ENCODE measurements at regions of chr10 and their contacts with region 1.

Region 1: DNA sequence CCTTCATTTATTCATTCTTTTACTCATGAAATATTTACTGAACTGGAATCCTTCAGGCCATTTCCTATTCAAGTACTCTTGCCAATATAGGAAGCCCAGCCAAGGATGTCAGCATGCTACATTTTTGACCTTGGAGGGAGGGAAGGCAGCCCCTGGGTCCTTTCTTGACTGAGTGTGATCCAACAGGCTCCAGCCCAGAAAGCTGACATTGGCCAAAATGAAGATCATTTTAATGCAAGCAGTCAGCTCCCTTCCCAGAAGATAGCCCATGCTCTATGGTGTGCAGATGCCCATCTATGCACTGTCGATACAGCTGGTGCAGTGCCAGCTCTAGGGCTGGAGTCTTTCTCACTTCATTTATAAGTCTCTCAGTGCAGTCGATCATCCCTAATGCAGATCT is 646.0 kb downstream of the KCNMA1 start:
- DNase-seq: no peak
- ATAC-seq: no peak
- H3K4me3 Mint-ChIP-seq: no peak overlapping the region
- H3K27ac Mint-ChIP-seq: no peak overlapping the region
- H3K4me1 Mint-ChIP-seq: no peaks in the 10 kb centered on the region
- H3K27me3 Mint-ChIP-seq: no peaks in the 10 kb centered on the region
- CTCF ChIP-seq: no peak

Region 2: GRCh38 chr10:77004917-77005564 is 13.4 kb after region 1 on chr10:
- CTCF ChIA-PET with region 1: interaction called, 12 read pairs
- POLR2A ChIA-PET with region 1: no interaction called
- intact Hi-C with region 1: no loop called
- DNase-seq: no peak
- ATAC-seq: no peak
- H3K4me3 Mint-ChIP-seq: no peak overlapping the region
- H3K27ac Mint-ChIP-seq: no peak overlapping the region
- H3K4me1 Mint-ChIP-seq: no peaks in the 10 kb centered on the region
- H3K27me3 Mint-ChIP-seq: no peaks in the 10 kb centered on the region
- CTCF ChIP-seq: peak; percentile 77

Measured in activated CD8-positive, alpha-beta T cell treated with anti-CD3 and anti-CD28 coated beads for 36 hours (primary cell).